ENCODE measurements at regions of chr2 and their contacts with region 1.

Region 1: GRCh38 chr2:65264821-65265670 is 37.4 kb downstream of the ACTR2 start:
- DNase-seq: peak in 2 of 4 donors; percentile 76 to 90
- ATAC-seq: peak; percentile 94
- H3K4me3 ChIP-seq: no peak overlapping the region
- H3K27ac ChIP-seq: no peak overlapping the region
- H3K4me1 ChIP-seq: peaks cover 3 to 6% of the 10 kb centered on the region in 2 donors
- H3K27me3 ChIP-seq: no peaks in the 10 kb centered on the region
- CTCF ChIP-seq: peak; percentile 49 to 56

Region 2: GRCh38 chr2:65357095-65357958 is 92.3 kb after region 1 on chr2:
- intact Hi-C with region 1: no loop called
- DNase-seq: no peak
- ATAC-seq: no peak
- H3K4me3 ChIP-seq: no peak overlapping the region
- H3K27ac ChIP-seq: no peak overlapping the region
- H3K4me1 ChIP-seq: peaks cover 5 to 53% of the 10 kb centered on the region in 2 donors
- H3K27me3 ChIP-seq: no peaks in the 10 kb centered on the region
- CTCF ChIP-seq: no peak

Region 3: DNA sequence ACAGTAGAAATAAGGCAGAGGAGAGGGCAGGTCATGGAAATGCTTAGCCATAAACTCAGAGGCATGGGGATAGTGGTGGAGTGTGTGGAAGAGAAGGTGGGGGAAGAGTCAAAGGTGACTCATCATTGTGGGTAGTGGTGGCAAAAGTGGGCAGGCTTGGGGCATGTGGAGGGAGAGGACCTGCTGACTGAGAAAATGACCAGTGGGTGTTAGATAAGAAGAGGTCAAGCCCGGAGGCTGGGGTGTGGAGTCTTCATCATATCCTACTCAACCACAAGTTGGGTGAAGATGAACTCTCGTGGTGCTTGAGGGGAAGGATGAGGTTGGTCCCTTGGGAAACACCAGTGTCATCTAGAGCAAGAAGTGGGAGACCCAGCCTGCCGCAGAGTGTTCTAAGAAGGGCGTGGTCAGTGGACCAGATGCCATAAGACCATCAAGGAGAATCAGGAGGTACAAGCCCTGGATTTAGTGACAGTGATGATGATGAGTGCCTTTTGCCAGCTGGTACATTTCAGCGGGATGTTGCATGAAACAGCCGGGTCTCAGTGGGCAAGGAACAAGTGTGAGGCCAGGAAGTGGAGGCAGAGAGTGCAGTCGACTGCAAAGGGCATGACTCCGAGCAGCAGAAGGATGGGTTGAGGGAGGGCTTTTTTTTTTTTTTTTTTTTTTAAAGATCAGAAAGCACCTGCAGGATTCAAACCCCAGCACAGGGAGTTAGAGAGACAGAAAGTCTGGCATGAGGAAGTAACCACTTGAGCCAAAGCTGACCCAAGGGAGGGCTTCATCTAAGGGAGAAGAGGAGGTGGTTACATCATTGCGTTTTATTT is 289.9 kb after region 1 on chr2:
- intact Hi-C with region 1: loop called in 1 of 2 experiments (anchors 5 kb)
- DNase-seq: no peak
- ATAC-seq: peak; percentile 15
- H3K4me3 ChIP-seq: no peak overlapping the region
- H3K27ac ChIP-seq: no peak overlapping the region
- H3K4me1 ChIP-seq: peaks cover 0 to 7% of the 10 kb centered on the region in 2 donors
- H3K27me3 ChIP-seq: no peaks in the 10 kb centered on the region
- CTCF ChIP-seq: no peak

Region 4: DNA sequence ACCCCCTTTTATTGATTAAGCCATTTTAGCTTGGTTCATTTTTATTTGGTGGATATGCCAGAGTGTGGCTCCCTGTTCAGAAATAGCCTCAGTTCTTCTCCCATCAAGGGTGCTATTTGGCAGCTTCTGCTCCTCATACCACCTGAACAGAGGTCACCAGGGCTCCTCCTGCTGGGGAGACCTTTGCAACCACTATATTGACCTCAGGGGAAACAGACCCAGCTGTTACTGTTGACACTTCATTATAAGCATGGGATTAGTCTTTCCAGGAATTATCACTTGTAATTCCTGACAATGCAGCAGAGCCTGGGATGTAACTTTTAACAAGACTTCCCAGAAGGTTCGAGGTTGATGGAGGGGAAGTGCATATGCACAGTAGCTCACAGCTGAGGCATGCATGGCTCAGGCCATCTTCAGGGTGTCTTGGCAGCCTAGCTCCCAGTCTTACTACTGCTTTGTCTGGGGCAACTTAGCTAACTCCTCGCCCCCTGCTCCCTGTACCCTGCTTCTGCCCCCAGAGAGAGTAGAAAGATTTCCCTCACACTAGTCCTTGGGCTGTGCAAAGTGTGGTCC is 406.7 kb after region 1 on chr2:
- intact Hi-C with region 1: no loop called
- DNase-seq: no peak
- ATAC-seq: no peak
- H3K4me3 ChIP-seq: no peak overlapping the region
- H3K27ac ChIP-seq: no peak overlapping the region
- H3K4me1 ChIP-seq: no peaks in the 10 kb centered on the region
- H3K27me3 ChIP-seq: no peaks in the 10 kb centered on the region
- CTCF ChIP-seq: no peak